ENCODE measurements at regions of chr5 and their contacts with region 1.

Region 1: DNA sequence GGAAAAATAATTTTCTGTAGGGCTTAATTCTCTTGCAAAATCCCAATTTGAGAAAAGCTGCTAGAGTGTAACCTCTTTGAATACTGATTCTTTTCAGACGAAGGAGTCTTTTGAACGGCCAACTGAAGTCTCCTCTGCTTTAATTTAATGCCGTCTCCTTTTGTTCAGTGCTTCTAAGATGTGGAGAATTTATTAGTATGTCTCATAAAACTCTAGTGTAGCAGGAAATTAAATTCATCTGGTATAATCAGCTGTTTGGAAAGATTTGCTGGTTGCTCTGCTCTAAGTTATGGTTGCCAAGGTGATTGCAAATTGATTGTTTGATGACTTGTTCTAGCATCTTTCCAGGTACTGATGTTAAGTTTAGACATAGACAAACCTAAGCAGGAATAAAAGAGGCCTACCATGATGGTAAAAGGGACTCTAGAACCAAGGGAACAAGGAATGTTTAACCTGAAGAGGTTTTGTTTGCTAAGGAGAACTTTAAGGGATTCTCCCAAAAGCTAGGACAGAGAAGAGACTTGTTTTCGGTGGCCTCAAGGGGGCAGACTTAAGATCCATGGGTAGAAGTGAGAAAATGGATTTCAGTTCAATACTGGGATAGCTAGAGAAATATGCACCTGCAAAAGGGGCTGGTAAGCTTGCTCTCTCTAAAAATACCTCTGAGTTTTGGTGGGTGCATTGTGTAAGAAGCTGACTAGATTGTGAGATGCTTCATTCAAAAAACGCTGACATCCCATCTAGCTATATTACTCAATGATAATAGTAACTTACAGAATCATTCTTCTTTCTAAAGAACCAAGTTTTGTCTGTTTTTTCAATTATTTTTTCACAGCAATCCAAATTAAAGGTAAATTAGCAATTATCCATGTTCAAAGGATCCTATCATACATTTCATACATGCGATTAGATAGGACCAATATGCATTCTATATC is 5.7 kb upstream of the ADRB2 start:
- DNase-seq: peak; percentile 53
- ATAC-seq: peak; percentile 62
- H3K4me3 Mint-ChIP-seq: no peak overlapping the region
- H3K27ac Mint-ChIP-seq: no peak overlapping the region
- H3K4me1 Mint-ChIP-seq: peaks cover 14% of the 10 kb centered on the region
- H3K27me3 Mint-ChIP-seq: peaks cover 39% of the 10 kb centered on the region

Region 2: GRCh38 chr5:148606296-148606695 is 214.4 kb before region 1 on chr5:
- CTCF ChIA-PET with region 1: no interaction called
- POLR2A ChIA-PET with region 1: no interaction called
- DNase-seq: no peak
- ATAC-seq: no peak
- H3K4me3 Mint-ChIP-seq: no peak overlapping the region
- H3K27ac Mint-ChIP-seq: no peak overlapping the region
- H3K4me1 Mint-ChIP-seq: no peaks in the 10 kb centered on the region
- H3K27me3 Mint-ChIP-seq: no peaks in the 10 kb centered on the region

Region 3: GRCh38 chr5:148740966-148741742 is 79.6 kb before region 1 on chr5:
- CTCF ChIA-PET with region 1: interaction called, 10 read pairs
- POLR2A ChIA-PET with region 1: no interaction called
- DNase-seq: no peak
- ATAC-seq: no peak
- H3K4me3 Mint-ChIP-seq: no peak overlapping the region
- H3K27ac Mint-ChIP-seq: no peak overlapping the region
- H3K4me1 Mint-ChIP-seq: peaks cover 2% of the 10 kb centered on the region
- H3K27me3 Mint-ChIP-seq: peaks cover 19% of the 10 kb centered on the region

Region 4: DNA sequence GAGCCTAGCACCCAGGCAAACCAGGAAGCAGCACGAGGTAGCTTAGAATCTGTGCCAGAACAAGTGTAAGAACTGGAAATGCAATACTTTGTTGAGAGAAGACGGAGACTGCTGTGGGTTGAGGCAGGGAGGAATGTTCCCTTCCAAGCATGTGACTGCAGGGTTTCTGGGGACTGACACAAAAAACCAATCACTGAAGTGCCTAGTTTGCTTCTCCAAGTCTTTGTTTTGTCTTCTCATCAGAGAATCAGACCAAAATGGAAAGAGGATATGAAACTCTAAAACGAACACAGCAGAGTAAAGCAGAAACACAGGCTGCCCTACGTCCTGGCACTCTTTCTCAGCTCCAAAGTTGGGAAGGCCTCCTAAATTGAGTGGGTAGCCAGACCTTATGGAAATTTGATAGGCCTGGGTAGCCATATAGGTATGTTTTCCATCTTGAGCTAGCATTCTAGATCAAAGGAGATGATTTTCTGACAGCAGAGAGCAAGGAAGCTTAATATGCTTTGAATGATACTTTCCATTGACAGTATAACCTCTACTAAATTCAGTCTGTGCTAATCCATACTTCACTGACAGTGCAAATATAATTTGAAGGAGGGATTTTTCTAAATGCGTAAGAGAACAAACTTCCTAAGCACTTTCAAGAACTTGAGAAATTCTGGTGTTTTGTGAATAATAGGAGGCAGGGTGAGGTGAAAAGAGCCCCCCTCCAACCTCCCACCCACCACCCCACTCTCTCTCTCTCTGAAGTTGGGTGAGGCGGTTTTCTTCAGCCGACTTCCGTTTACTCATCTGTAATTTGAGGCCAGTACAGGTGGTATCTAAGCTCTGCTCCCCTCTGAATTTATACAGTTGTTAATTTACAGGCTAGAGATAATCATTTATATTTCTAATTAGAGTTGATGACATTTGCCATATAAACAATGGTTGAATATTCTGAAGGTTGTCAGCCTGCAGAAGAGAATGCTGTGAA is 11.2 kb after region 1 on chr5:
- CTCF ChIA-PET with region 1: interaction called, 21 read pairs
- POLR2A ChIA-PET with region 1: no interaction called
- DNase-seq: no peak
- ATAC-seq: no peak
- H3K4me3 Mint-ChIP-seq: no peak overlapping the region
- H3K27ac Mint-ChIP-seq: no peak overlapping the region
- H3K4me1 Mint-ChIP-seq: peaks cover 62% of the 10 kb centered on the region
- H3K27me3 Mint-ChIP-seq: peaks cover 46% of the 10 kb centered on the region

Region 5: GRCh38 chr5:148849461-148849860 is 28.7 kb after region 1 on chr5:
- CTCF ChIA-PET with region 1: interaction called, 18 read pairs
- POLR2A ChIA-PET with region 1: no interaction called
- DNase-seq: peak; percentile 77
- ATAC-seq: peak; percentile 90
- H3K4me3 Mint-ChIP-seq: peak overlapping the region; percentile 61
- H3K27ac Mint-ChIP-seq: peak overlapping the region; percentile 99
- H3K4me1 Mint-ChIP-seq: peaks cover 82% of the 10 kb centered on the region
- H3K27me3 Mint-ChIP-seq: peaks cover 2% of the 10 kb centered on the region

Region 6: GRCh38 chr5:149024477-149024876 is 203.7 kb after region 1 on chr5:
- CTCF ChIA-PET with region 1: no interaction called
- POLR2A ChIA-PET with region 1: no interaction called
- DNase-seq: no peak
- ATAC-seq: no peak
- H3K4me3 Mint-ChIP-seq: no peak overlapping the region
- H3K27ac Mint-ChIP-seq: no peak overlapping the region
- H3K4me1 Mint-ChIP-seq: no peaks in the 10 kb centered on the region
- H3K27me3 Mint-ChIP-seq: peaks cover 23% of the 10 kb centered on the region

Region 7: GRCh38 chr5:149035372-149035790 is 214.7 kb after region 1 on chr5:
- CTCF ChIA-PET with region 1: interaction called, 27 read pairs
- POLR2A ChIA-PET with region 1: no interaction called
- DNase-seq: peak; percentile 79
- ATAC-seq: peak; percentile 89
- H3K4me3 Mint-ChIP-seq: no peak overlapping the region
- H3K27ac Mint-ChIP-seq: no peak overlapping the region
- H3K4me1 Mint-ChIP-seq: peaks cover 30% of the 10 kb centered on the region
- H3K27me3 Mint-ChIP-seq: peaks cover 6% of the 10 kb centered on the region